ENCODE measurements at regions of chr3 and their contacts with region 1.

Region 1: DNA sequence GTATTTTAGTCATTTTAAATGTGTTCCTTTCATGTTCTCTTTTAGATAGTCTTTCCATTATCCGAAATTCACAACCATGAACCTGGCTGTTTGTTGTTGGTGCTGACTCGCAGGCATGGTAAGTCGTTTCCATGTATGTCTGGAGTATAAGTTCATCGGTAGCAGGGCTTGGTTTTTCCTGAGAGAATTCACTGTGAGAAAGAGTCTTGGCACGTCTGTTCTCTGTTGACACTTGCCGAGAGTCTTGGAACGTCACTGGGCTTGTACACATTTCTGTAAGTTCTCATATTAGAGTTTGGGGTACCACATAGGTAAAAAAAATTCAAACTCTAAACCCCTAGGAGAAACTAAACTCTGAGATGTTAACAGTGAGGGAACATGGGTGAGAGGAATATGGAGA is 29.4 kb upstream of the EIF4A2 start:
- DNase-seq: no peak
- ATAC-seq: no peak
- H3K4me3 ChIP-seq: no peak overlapping the region
- H3K27ac ChIP-seq: no peak overlapping the region
- H3K4me1 ChIP-seq: peaks cover 0 to 5% of the 10 kb centered on the region in 2 experiments; a peak in 2 of 5 replicates
- H3K27me3 ChIP-seq: no peaks in the 10 kb centered on the region
- CTCF ChIP-seq: no peak
- EP300 ChIP-seq: no peak
- POLR2A ChIP-seq: no peak
- RAD21 ChIP-seq: no peak

Region 2: GRCh38 chr3:186694288-186695032 is 59.5 kb before region 1 on chr3:
- CTCF ChIA-PET with region 1: no interaction called
- POLR2A ChIA-PET with region 1: no interaction called
- in situ Hi-C with region 1: no loop called
- intact Hi-C with region 1: loop called (anchors 5 kb)
- DNase-seq: no peak
- ATAC-seq: no peak
- H3K4me3 ChIP-seq: no peak overlapping the region
- H3K27ac ChIP-seq: no peak overlapping the region
- H3K4me1 ChIP-seq: peaks cover 0 to 5% of the 10 kb centered on the region in 2 experiments; a peak in 2 of 5 replicates
- H3K27me3 ChIP-seq: peaks cover 8 to 21% of the 10 kb centered on the region in 2 experiments
- CTCF ChIP-seq: no peak
- EP300 ChIP-seq: no peak
- POLR2A ChIP-seq: no peak
- RAD21 ChIP-seq: no peak